Activated B cell treated with CpG ODN at 0.5 μM for 24 hours (primary cell): ENCODE measurements at regions of chr7 and their contacts with region 1.

Region 1: GRCh38 chr7:121395961-121396757 is at the start of gene FAM3C:
- DNase-seq: peak; percentile 96
- ATAC-seq: peak; percentile 88
- H3K4me3 Mint-ChIP-seq: peak within 1 kb of the TSS; percentile 91
- H3K27ac Mint-ChIP-seq: peak within 1 kb of the TSS; percentile 90
- H3K4me1 Mint-ChIP-seq: peaks cover 42% of the 10 kb centered on the region
- H3K27me3 Mint-ChIP-seq: no peaks in the 10 kb centered on the region
- CTCF ChIP-seq: no peak
- total RNA-seq, gene FAM3C: 54.8 and 59.3 TPM in 2 replicates

Region 2: DNA sequence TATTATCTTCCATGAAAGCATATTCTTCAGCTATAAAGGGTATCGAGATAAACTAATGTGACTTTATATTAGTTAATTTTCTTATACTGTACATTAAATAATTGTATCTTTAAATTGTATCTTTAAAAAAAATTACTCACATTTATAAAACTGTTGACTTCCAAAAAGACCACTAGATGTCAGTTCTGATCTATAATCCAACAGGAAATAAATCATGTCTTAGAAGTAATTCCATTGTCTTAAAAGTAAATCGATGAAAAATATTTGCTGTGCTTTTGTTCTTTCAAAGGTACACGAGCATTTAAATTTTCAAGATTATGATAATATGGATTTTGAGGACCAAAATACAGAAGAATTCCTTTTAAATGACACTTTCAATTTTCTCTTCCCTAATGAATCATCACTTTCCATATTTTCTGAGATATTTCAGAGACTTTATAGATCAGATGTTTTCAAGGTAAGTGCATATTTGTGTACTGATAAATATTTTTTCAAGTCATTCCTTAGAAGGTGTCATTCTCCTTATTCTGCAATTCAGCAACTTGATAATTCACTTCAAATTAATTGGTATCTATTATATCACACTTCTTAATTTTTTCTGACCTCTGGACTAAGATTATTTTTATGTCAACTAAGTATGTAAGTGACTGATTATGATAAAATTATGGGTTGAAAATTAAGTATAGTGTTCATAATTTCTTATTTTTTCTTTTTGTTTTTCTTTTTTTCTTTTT is 269.2 kb before region 1 on chr7:
- CTCF ChIA-PET with region 1: interaction called, 3 read pairs
- POLR2A ChIA-PET with region 1: no interaction called
- intact Hi-C with region 1: loop called (anchors 1 kb)
- DNase-seq: no peak
- ATAC-seq: no peak
- H3K4me3 Mint-ChIP-seq: no peak overlapping the region
- H3K27ac Mint-ChIP-seq: no peak overlapping the region
- H3K4me1 Mint-ChIP-seq: peaks cover 18% of the 10 kb centered on the region
- H3K27me3 Mint-ChIP-seq: no peaks in the 10 kb centered on the region
- CTCF ChIP-seq: no peak

Region 3: DNA sequence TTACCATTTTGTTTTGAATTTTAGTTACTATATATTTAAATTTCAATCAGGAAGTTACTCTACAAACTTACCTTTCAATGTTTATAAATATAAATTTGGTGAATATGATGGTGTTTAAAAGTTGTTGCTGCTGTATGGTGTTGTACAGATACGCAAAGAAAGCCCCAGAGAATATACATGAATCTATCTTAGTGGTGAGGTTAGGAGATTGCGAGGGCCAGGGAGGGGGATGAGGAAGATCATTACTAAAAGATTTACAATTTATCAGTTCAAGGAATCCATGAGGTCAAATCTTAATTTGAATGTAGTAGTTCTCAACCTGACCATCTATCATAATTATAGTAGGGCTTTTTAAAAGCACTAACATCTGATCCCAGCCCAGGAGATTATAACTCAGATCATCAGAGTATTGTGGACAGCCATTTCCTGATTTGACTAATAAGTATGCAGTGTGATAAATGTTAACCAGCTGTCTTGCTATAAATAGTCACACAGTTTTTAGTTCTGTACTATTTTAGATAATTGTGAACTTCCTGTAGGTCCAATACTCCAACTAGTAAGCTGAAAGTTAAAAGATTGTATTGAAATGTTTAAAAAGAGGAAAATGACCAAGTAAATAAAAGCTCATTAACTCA is 23.7 kb before region 1 on chr7:
- CTCF ChIA-PET with region 1: interaction called, 221 read pairs
- POLR2A ChIA-PET with region 1: interaction called, 152 read pairs
- intact Hi-C with region 1: loop called (anchors 1 kb)
- DNase-seq: no peak
- ATAC-seq: peak; percentile 71
- H3K4me3 Mint-ChIP-seq: peak overlapping the region; percentile 63
- H3K27ac Mint-ChIP-seq: peak overlapping the region; percentile 91
- H3K4me1 Mint-ChIP-seq: peaks cover 91% of the 10 kb centered on the region
- H3K27me3 Mint-ChIP-seq: no peaks in the 10 kb centered on the region
- CTCF ChIP-seq: no peak

Region 4: DNA sequence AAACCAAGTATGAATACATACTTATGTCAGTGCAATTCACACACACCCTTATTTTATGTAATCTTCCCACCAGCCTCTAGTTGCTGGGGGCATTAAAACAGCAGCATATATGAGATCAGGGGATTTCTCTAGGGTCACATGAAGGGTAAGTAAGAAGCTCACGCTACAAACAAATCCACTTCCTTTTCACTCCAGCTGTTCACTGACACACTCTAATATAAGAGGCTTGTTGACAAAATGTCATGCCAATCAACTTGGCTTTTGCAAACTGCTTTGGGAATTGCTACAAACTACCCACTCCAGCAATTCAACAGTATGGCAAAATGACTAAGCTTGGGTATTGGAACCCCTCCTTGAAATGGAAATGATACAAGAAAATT is 10.4 kb before region 1 on chr7:
- CTCF ChIA-PET with region 1: interaction called, 19 read pairs
- POLR2A ChIA-PET with region 1: interaction called, 116 read pairs
- intact Hi-C with region 1: loop called (anchors 1 kb)
- DNase-seq: no peak
- ATAC-seq: peak; percentile 86
- H3K4me3 Mint-ChIP-seq: peak overlapping the region; percentile 54
- H3K27ac Mint-ChIP-seq: peak overlapping the region; percentile 83
- H3K4me1 Mint-ChIP-seq: peaks cover 96% of the 10 kb centered on the region
- H3K27me3 Mint-ChIP-seq: no peaks in the 10 kb centered on the region
- CTCF ChIP-seq: no peak